ENCODE measurements at regions of chr10 and their contacts with region 1.

Region 1: GRCh38 chr10:33193057-33193700 is 141.3 kb downstream of the NRP1 start:
- DNase-seq: peak; percentile 58
- H3K4me3 ChIP-seq: no peak overlapping the region
- H3K27ac ChIP-seq: no peak overlapping the region
- H3K27me3 ChIP-seq: no peaks in the 10 kb centered on the region
- CTCF ChIP-seq: peak; percentile 76

Region 2: DNA sequence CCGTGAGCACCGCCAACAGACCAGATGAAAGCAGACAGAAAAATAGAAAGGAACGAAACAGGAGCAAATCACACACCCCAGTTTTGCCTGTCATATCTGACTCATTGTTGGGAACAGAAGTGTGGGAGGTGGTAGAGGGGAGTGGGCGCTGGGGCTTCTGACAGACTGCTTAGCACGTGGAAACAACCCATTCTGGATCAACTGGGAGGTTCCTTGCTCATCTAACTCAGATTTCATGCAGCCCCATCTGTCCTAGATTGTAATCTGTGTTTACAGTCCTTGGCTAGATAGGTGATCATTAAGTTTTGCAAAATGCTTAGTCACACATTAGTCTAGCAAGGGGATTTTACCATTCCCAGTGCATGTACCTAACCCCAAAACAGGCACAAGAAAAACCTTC is 12.8 kb before region 1 on chr10:
- CTCF ChIA-PET with region 1: interaction called, 12 read pairs
- POLR2A ChIA-PET with region 1: no interaction called
- DNase-seq: no peak
- H3K4me3 ChIP-seq: no peak overlapping the region
- H3K27ac ChIP-seq: no peak overlapping the region
- H3K27me3 ChIP-seq: no peaks in the 10 kb centered on the region
- CTCF ChIP-seq: no peak

Region 3: DNA sequence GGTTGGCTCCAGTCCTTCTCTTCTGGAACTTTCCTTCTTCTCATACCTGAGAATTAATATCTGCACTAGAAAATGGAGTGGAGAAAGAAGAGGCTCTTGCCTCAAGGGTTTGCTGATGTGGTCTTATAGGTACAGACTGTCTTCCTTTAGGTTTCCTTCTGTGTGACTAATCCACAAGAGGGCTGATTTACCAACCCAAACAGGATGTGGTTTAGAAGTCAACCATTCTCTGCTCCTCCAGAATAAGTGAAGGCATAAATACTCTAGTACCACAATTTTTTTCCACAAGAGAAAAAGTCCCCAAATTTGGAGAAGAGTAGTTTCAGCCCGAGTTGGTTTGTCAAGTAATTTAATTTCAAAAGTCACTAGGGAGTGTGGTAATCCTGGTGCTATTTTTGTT is 55.5 kb after region 1 on chr10:
- CTCF ChIA-PET with region 1: interaction called, 18 read pairs
- POLR2A ChIA-PET with region 1: no interaction called
- DNase-seq: peak; percentile 74
- H3K4me3 ChIP-seq: no peak overlapping the region
- H3K27ac ChIP-seq: no peak overlapping the region
- H3K27me3 ChIP-seq: no peaks in the 10 kb centered on the region
- CTCF ChIP-seq: no peak

Region 4: GRCh38 chr10:33330543-33331378 is 137.6 kb after region 1 on chr10:
- CTCF ChIA-PET with region 1: interaction called, 33 read pairs
- POLR2A ChIA-PET with region 1: interaction called, 3 read pairs
- DNase-seq: peak; percentile 80
- H3K4me3 ChIP-seq: peak overlapping the region; percentile 93
- H3K27ac ChIP-seq: no peak overlapping the region
- H3K27me3 ChIP-seq: no peaks in the 10 kb centered on the region
- CTCF ChIP-seq: peak; percentile 97